ENCODE measurements at regions of chr15 and their contacts with region 1.

Region 1: GRCh38 chr15:74265046-74265639 is 29.0 kb downstream of the CCDC33 start:
- DNase-seq: peak in 1 of 9 donors; percentile 13
- ATAC-seq: no peak
- H3K4me3 ChIP-seq: no peak overlapping the region
- H3K4me3 Mint-ChIP-seq: no peak overlapping the region
- H3K27ac ChIP-seq: no peak overlapping the region
- H3K27ac Mint-ChIP-seq: no peak overlapping the region
- H3K4me1 ChIP-seq: no peaks in the 10 kb centered on the region
- H3K4me1 Mint-ChIP-seq: no peaks in the 10 kb centered on the region
- H3K27me3 ChIP-seq: no peaks in the 10 kb centered on the region
- H3K27me3 Mint-ChIP-seq: peaks cover 8 to 54% (median 35%) of the 10 kb centered on the region in 5 donors

Region 2: GRCh38 chr15:74213858-74214284 is 51.3 kb before region 1 on chr15:
- CTCF ChIA-PET with region 1: no interaction called
- POLR2A ChIA-PET with region 1: no interaction called
- intact Hi-C with region 1: no loop called
- DNase-seq: no peak
- ATAC-seq: no peak
- H3K4me3 ChIP-seq: no peak overlapping the region
- H3K4me3 Mint-ChIP-seq: no peak overlapping the region
- H3K27ac ChIP-seq: no peak overlapping the region
- H3K27ac Mint-ChIP-seq: no peak overlapping the region
- H3K4me1 ChIP-seq: no peaks in the 10 kb centered on the region
- H3K4me1 Mint-ChIP-seq: peaks cover 0 to 1% (median 0%) of the 10 kb centered on the region in 7 donors
- H3K27me3 ChIP-seq: no peaks in the 10 kb centered on the region
- H3K27me3 Mint-ChIP-seq: peaks cover 0 to 7% (median 5%) of the 10 kb centered on the region in 5 donors

Region 3: GRCh38 chr15:74291101-74292071 is 26.2 kb after region 1 on chr15:
- CTCF ChIA-PET with region 1: no interaction called
- POLR2A ChIA-PET with region 1: no interaction called
- intact Hi-C with region 1: loop called in 1 of 2 experiments (anchors 2 kb)
- DNase-seq: peak; percentile 19 to 79 (median 52)
- ATAC-seq: peak; percentile 67
- H3K4me3 ChIP-seq: no peak overlapping the region
- H3K4me3 Mint-ChIP-seq: no peak overlapping the region
- H3K27ac ChIP-seq: no peak overlapping the region
- H3K27ac Mint-ChIP-seq: no peak overlapping the region
- H3K4me1 ChIP-seq: no peaks in the 10 kb centered on the region
- H3K4me1 Mint-ChIP-seq: peaks cover 0 to 7% (median 0%) of the 10 kb centered on the region in 7 donors
- H3K27me3 ChIP-seq: peaks cover 0 to 5% of the 10 kb centered on the region in 2 donors
- H3K27me3 Mint-ChIP-seq: peaks cover 0 to 55% (median 44%) of the 10 kb centered on the region in 5 donors

Measured in naive thymus-derived CD4-positive, alpha-beta T cell (primary cell).